ENCODE measurements at regions of chr15 and their contacts with region 1.

Region 1: DNA sequence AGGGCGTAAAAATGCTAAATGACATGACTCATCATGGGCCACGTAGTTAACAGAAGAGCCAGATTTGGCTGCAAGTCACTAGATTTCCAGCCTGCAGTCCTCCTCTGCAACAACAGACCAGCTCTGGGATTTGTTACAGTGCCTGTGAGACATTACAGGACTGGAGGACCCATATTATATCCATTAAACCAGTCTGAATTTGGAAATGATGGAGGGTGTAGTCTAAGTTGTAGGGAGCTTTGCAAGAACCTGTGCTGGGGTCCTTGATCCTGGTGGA is 10.8 kb downstream of the ZNF774 start:
- DNase-seq: no peak
- ATAC-seq: no peak
- H3K4me3 Mint-ChIP-seq: no peak overlapping the region
- H3K27ac Mint-ChIP-seq: no peak overlapping the region
- H3K4me1 Mint-ChIP-seq: peaks cover 32% of the 10 kb centered on the region
- H3K27me3 Mint-ChIP-seq: no peaks in the 10 kb centered on the region

Region 2: DNA sequence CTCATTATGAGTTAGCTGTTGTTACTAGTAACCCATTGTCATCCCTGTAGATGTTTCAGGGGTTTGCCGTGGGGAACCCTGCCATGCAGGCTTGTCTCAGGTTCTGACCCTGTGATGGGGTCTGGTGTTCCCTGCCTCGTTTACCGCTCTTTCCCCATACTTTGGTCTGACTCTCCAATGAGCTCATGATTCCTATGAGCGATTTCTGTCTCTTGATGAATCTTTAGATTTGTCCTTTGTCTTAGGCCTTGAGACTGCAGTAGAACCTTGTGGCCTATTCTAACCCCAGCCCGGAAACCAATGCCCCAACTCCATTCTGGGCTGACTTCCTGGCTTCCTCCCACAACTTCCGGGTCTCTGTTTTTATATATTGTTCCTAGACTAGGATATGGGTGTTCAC is 13.9 kb after region 1 on chr15:
- POLR2A ChIA-PET with region 1: interaction called, 20 read pairs
- DNase-seq: peak; percentile 71
- ATAC-seq: peak; percentile 94
- H3K4me3 Mint-ChIP-seq: peak overlapping the region; percentile 64
- H3K27ac Mint-ChIP-seq: peak overlapping the region; percentile 93
- H3K4me1 Mint-ChIP-seq: peaks cover 29% of the 10 kb centered on the region
- H3K27me3 Mint-ChIP-seq: no peaks in the 10 kb centered on the region